ENCODE measurements at regions of chr7 and their contacts with region 1.

Region 1: DNA sequence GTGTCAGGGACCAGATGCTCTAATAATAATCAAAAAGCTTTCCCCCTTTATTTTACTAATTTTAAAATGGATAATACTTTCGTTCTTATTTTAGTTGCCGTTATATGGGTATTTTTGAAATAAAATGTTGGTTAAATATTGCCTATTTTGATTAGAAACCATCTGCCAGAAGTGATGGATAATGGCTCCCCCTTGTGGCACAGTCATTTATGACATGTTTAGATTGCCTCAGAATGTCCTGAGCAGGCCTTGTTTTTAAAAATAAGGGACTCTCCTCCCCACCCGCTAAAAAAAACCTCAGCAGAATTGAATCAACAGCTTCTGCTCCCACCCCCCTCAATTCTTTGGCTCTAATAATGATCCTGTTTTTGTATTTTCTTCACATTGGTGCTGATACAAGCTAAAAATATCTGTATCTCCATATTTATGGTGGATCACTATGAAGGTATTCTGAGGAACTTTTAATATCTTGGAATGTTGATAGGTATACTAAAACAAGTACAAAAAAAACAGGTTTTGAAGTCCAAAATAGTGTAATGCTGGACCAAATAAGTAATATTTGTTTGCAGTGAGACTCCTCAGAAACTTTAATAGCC is 38.8 kb downstream of the TMEM60 start:
- DNase-seq: no peak

Region 2: GRCh38 chr7:77442636-77443035 is 316.8 kb before region 1 on chr7:
- intact Hi-C with region 1: loop called (anchors 10 kb)
- DNase-seq: no peak

Region 3: DNA sequence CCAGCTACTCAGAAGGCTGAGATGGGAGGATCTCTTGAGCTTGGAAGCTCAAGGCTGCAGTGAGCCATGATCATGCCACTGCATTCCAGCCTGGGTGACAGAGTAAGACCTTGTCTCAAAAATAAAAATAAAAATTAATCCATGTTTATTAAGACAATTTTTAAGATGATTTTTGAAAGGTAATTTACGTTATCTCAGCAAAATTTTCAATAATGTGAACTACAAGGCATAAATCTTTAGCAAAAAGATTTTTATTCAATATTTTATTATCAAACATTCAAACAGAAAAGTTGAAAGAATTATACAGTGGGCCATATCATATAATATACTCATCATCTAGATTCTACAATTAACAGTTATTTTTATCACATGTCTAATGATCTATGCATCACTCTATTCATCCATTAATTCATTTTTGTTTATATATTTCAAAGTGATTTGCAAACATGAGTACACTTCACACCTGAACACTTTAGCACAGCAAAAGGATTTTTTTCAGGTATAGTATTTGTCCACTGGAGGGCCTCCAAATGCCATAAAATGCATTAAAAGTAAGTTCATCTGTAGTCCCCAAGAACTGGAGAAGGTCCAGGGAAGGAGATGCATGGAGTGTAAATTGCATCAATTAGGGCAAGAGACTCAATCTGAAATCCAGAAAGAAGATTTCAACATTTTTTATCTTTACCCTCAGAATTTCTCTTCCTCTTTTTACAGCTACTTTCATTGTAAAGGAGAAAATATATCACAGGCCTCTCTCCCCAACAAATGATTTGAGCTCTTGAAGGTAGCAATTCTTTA is 101.8 kb before region 1 on chr7:
- intact Hi-C with region 1: loop called (anchors 5 kb)
- DNase-seq: no peak

Region 4: GRCh38 chr7:77696198-77697028 is 63.0 kb before region 1 on chr7 and contains the start of gene RSBN1L:
- intact Hi-C with region 1: no loop called
- DNase-seq: peak; percentile 100
- total RNA-seq, gene RSBN1L: 9.4 TPM

Measured in cardiac septum (tissue), 1 donor.